ENCODE measurements at regions of chr7 and their contacts with region 1.

Region 1: DNA sequence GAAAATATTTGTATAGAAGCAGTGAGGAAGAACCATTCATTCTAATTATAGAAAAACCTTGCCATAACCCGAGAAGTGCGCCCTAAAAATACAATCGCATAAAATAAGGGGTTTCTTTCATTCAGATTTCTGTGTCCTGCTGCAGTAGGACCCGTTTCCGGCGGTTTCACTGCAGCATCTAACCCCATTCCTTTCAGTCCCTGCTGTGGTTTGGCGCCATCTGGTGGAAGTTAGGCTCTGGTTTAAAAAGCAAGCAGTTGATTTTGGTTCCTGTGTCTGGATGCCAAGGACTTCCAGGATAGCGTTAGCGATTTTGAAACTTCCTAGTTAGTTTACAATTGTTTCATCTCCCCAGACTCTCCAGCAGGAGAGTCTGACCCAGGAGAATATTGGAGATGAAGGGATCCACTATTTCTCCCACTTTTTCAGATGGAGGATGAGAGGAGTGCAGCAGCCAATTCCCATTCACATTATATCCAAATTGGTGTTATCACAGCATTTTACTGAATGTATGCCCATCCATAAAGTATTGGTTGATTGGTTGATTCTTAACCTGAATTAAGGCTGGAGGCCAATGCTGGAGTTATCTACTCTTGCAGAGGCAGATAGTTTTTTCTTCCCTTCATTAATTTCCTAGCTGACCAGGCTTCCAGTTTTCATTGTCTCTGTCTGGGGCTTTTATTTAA is 128.8 kb upstream of the CACNA2D1 start:
- DNase-seq: peak; percentile 52
- ATAC-seq: no peak
- H3K4me3 ChIP-seq: no peak overlapping the region
- H3K4me3 Mint-ChIP-seq: no peak overlapping the region
- H3K27ac ChIP-seq: no peak overlapping the region
- H3K27ac Mint-ChIP-seq: no peak overlapping the region
- H3K4me1 ChIP-seq: no peaks in the 10 kb centered on the region
- H3K4me1 Mint-ChIP-seq: no peaks in the 10 kb centered on the region
- H3K27me3 ChIP-seq: no peaks in the 10 kb centered on the region
- H3K27me3 Mint-ChIP-seq: no peaks in the 10 kb centered on the region
- CTCF ChIP-seq: peak; percentile 74

Region 2: GRCh38 chr7:80699045-80699638 is 1873.2 kb before region 1 on chr7:
- CTCF ChIA-PET with region 1: interaction called, 3 read pairs
- POLR2A ChIA-PET with region 1: no interaction called
- intact Hi-C with region 1: loop called (anchors 5 kb)
- DNase-seq: peak; percentile 18
- ATAC-seq: no peak
- H3K4me3 ChIP-seq: no peak overlapping the region
- H3K4me3 Mint-ChIP-seq: no peak overlapping the region
- H3K27ac ChIP-seq: no peak overlapping the region
- H3K27ac Mint-ChIP-seq: no peak overlapping the region
- H3K4me1 ChIP-seq: no peaks in the 10 kb centered on the region
- H3K4me1 Mint-ChIP-seq: peaks cover 5% of the 10 kb centered on the region
- H3K27me3 ChIP-seq: no peaks in the 10 kb centered on the region
- H3K27me3 Mint-ChIP-seq: no peaks in the 10 kb centered on the region
- CTCF ChIP-seq: peak; percentile 78

Region 3: GRCh38 chr7:81482600-81483186 is 1089.6 kb before region 1 on chr7:
- CTCF ChIA-PET with region 1: interaction called, 12 read pairs
- POLR2A ChIA-PET with region 1: no interaction called
- intact Hi-C with region 1: no loop called
- DNase-seq: peak; percentile 10
- ATAC-seq: no peak
- H3K4me3 ChIP-seq: no peak overlapping the region
- H3K4me3 Mint-ChIP-seq: no peak overlapping the region
- H3K27ac ChIP-seq: no peak overlapping the region
- H3K27ac Mint-ChIP-seq: no peak overlapping the region
- H3K4me1 ChIP-seq: no peaks in the 10 kb centered on the region
- H3K4me1 Mint-ChIP-seq: no peaks in the 10 kb centered on the region
- H3K27me3 ChIP-seq: no peaks in the 10 kb centered on the region
- H3K27me3 Mint-ChIP-seq: no peaks in the 10 kb centered on the region
- CTCF ChIP-seq: peak; percentile 82

Region 4: GRCh38 chr7:81499262-81500116 is 1072.8 kb before region 1 on chr7:
- CTCF ChIA-PET with region 1: interaction called, 11 read pairs
- POLR2A ChIA-PET with region 1: no interaction called
- intact Hi-C with region 1: no loop called
- DNase-seq: peak; percentile 32
- ATAC-seq: no peak
- H3K4me3 ChIP-seq: no peak overlapping the region
- H3K4me3 Mint-ChIP-seq: no peak overlapping the region
- H3K27ac ChIP-seq: no peak overlapping the region
- H3K27ac Mint-ChIP-seq: no peak overlapping the region
- H3K4me1 ChIP-seq: no peaks in the 10 kb centered on the region
- H3K4me1 Mint-ChIP-seq: no peaks in the 10 kb centered on the region
- H3K27me3 ChIP-seq: no peaks in the 10 kb centered on the region
- H3K27me3 Mint-ChIP-seq: no peaks in the 10 kb centered on the region
- CTCF ChIP-seq: peak; percentile 29

Region 5: DNA sequence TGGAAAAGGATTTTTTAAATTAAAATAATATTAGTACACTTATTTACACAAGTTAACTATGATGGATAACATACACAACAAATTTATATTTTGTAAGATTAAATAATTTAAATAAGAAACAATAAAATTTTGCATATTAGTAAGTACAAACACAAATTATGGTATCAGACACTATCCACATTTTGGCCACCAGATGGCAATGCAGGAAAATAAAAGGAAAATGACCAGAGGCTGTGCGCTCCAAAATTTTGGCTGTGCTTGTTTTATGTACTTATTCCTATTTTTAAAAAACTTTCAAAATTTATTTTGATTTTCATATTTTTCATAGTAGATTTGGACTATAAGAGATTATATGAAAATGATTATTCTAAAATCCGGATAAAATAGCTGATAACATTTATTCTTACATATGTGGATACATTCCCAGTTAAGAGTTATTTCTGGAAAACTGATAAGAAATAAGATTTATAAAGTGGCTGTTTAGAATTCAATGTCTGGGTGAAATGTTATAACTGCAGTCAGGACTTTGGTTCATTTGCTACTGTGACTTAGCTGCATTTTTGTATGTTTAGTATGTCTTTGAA is 527.7 kb before region 1 on chr7:
- CTCF ChIA-PET with region 1: no interaction called
- POLR2A ChIA-PET with region 1: no interaction called
- intact Hi-C with region 1: loop called (anchors 2 kb)
- DNase-seq: no peak
- ATAC-seq: no peak
- H3K4me3 ChIP-seq: no peak overlapping the region
- H3K4me3 Mint-ChIP-seq: no peak overlapping the region
- H3K27ac ChIP-seq: no peak overlapping the region
- H3K27ac Mint-ChIP-seq: no peak overlapping the region
- H3K4me1 ChIP-seq: no peaks in the 10 kb centered on the region
- H3K4me1 Mint-ChIP-seq: no peaks in the 10 kb centered on the region
- H3K27me3 ChIP-seq: no peaks in the 10 kb centered on the region
- H3K27me3 Mint-ChIP-seq: no peaks in the 10 kb centered on the region
- CTCF ChIP-seq: peak; percentile 41